Activated naive CD4-positive, alpha-beta T cell treated with anti-CD3 and anti-CD28 coated beads for 36 hours (primary cell): ENCODE measurements at regions of chr17 and their contacts with region 1.

Region 1: GRCh38 chr17:49861150-49861892 is 13.5 kb upstream of the TAC4 start:
- DNase-seq: peak; percentile 58
- H3K4me3 Mint-ChIP-seq: no peak overlapping the region
- H3K27ac Mint-ChIP-seq: no peak overlapping the region
- H3K4me1 Mint-ChIP-seq: peaks cover 3% of the 10 kb centered on the region
- H3K27me3 Mint-ChIP-seq: peaks cover 3% of the 10 kb centered on the region

Region 2: DNA sequence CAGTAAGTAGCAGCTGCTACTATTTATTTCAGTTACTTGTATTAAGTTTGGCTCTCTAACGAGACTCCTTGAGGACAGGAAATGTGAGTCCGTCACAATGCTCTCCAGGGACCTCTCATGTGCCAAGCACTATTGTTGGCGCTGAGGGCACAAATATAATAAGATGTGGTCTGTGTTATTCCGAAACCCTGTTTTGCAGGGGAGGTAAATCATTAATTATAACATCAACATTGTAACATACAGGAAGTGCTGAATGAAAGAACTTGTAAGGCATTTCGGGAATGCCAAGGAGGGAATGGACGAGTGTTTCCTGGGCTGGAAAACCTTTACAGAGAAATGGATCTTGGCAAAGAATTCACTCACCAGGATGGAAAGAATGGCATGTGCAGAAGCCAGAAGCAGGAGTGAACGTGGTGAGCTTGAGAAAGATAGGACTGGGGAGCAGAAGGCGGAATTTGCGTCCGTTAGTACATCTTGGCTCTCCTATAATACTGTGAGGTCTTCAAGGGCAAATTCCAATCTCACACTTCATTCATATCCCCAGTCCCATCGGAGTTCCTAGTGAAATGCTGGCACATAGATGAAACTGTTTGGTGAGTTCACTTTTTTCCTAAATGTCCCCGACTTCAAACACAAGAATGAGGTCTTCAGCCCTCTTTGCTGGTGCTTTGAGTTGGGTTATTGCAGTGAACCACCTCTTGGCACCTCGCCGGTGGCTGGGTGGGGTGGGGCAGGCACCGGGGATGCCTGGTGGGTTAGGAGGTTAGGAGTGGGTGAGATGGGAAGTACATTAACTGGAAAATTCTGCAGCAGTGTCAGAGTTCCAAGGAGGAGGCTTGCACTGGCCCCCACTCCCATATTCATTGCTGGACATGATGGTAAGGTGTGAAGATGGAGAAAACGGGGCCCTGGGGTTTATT is 24.9 kb before region 1 on chr17:
- CTCF ChIA-PET with region 1: no interaction called
- intact Hi-C with region 1: no loop called
- DNase-seq: no peak
- H3K4me3 Mint-ChIP-seq: no peak overlapping the region
- H3K27ac Mint-ChIP-seq: no peak overlapping the region
- H3K4me1 Mint-ChIP-seq: no peaks in the 10 kb centered on the region
- H3K27me3 Mint-ChIP-seq: no peaks in the 10 kb centered on the region

Region 3: GRCh38 chr17:49880291-49881053 is 19.2 kb after region 1 on chr17:
- CTCF ChIA-PET with region 1: interaction called, 4 read pairs
- intact Hi-C with region 1: loop called (anchors 2 kb)
- DNase-seq: peak; percentile 81
- H3K4me3 Mint-ChIP-seq: no peak overlapping the region
- H3K27ac Mint-ChIP-seq: no peak overlapping the region
- H3K4me1 Mint-ChIP-seq: peaks cover 7% of the 10 kb centered on the region
- H3K27me3 Mint-ChIP-seq: peaks cover 32% of the 10 kb centered on the region